ENCODE measurements at regions of chr2 and their contacts with region 1.

Region 1: GRCh38 chr2:235595422-235596010 is 101.7 kb downstream of the AGAP1 start:
- DNase-seq: peak; percentile 81
- ATAC-seq: peak; percentile 82

Region 2: DNA sequence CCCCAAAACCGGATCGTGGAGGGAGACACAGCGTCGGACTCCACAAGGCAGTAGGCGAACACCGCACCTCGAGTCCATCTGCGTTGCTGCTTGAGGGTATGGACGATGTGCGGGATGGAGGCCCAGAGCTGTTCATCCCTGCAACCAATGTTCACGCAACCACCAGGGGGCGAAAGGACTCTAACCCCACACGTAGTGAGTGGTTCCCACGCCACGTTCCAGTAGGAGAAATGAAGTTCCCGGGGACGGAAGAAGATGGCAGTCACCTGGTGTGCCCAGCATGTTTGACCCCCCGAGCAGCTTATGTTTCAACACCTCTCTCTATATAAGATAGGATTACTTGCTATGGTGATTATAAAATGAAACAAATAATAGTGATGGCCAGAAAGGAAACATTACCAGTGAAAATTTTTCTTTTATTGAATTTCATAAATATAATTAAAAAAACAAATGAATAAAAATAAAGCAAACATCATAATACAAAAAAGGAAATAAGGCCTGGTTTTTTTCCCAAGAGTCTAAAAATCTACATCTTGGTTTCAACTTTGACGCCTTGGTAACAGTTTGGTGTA is 459.4 kb before region 1 on chr2:
- intact Hi-C with region 1: loop called (anchors 2 kb)
- DNase-seq: peak; percentile 85
- ATAC-seq: peak; percentile 94

Region 3: DNA sequence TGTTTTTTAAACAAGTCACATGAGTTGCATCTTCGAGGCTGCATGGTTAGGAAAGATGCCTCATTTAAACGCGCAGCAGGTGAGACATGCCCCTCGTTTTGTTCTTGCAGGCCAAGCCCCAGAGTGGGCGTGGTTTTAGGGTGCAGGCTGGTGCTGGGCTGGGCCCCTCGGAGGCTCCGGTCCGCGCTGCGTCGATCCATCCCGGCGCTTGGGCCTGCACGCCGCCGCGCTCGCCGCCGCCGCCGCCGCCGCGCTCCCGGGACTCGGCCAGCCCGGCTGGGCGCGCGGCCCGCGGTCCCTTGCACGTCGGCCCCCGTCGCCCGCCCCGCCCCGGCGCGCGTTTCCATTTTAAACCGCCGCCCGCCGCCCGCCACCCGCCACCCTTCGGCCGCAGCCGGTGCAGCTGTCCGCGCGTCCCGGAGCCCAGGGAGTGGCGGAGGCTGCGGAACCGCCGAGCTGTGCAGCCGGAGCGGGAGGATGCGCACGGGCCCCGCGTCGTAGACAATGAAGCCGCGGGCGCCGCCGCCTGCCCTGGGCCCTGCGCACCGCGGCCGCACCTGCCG is 73.8 kb after region 1 on chr2:
- intact Hi-C with region 1: loop called (anchors 5 kb)
- DNase-seq: peak; percentile 79
- ATAC-seq: peak; percentile 80

Region 4: GRCh38 chr2:235746257-235747084 is 151.0 kb after region 1 on chr2:
- intact Hi-C with region 1: loop called (anchors 2 kb)
- DNase-seq: no peak
- ATAC-seq: peak; percentile 92